HEK293 (cell line): ENCODE measurements at regions of chr16 and their contacts with region 1.

Region 1: DNA sequence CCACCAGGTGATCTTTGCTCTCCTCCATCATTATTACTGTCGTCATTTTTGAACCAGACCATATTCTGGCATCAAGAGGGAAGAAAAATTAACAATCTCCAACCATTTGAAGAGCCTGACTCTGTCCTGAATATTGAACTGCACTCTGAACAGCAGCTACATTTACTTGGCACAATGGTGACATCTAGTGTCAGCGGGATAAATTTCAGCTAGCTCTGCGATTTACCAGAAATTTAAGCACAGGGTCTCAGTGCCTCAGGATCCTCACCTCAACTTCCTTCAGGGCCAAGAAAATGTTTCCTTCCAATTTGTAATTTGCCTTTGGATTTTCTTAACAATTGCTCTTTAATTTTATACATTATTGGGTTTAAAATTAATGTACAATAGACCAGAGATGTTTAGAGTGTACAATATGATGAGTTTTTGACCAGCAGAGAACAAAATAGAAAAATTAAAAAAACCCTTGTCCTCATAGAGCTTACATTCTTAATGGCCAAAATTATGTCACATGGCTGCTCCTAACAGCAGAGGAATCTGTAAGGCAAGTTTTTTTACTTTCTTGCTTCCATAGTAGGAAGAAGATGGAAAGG is 10.7 kb upstream of the ZNF19 start:
- H3K4me3 ChIP-seq: no peak overlapping the region
- H3K27ac ChIP-seq: no peak overlapping the region
- H3K4me1 ChIP-seq: no peaks in the 10 kb centered on the region
- CTCF ChIP-seq: no peak

Region 2: DNA sequence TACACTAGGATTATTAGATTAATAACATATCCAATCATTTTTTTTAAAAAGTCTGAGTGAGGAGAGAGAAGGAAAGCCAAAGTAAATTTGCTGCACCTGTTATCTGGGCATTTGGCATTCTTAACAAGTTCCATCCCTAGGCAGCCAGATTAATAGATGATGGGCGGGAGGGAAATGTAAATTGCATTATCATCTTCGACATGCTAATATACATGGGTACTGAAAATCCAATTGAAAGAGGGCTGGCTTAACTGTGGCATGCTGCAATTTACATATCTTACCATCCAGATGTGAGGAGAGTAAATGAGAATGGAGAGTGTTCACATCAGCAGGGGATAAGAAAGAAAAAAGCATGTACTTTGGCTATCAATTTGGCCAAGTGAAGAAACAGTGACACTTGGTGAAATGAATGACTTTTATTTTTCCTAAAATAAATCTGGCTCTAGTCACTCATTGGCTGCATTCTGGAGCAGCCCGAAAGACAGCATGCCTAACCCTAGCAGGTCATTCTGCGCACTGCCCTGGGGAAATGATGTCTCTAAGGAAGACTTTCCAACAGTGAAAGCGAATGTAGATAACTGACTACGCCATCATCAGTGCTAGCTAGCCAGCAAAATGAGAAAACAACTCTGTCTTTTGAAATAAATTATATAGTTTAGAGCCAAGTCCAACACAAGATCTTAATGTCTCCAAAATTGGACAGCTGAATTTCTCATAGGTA is 327.2 kb before region 1 on chr16:
- CTCF ChIA-PET with region 1: no interaction called
- POLR2A ChIA-PET with region 1: no interaction called
- H3K4me3 ChIP-seq: no peak overlapping the region
- H3K27ac ChIP-seq: no peak overlapping the region
- H3K4me1 ChIP-seq: no peaks in the 10 kb centered on the region
- CTCF ChIP-seq: no peak

Region 3: GRCh38 chr16:71520555-71520954 is 20.7 kb after region 1 on chr16:
- CTCF ChIA-PET with region 1: interaction called, 18 read pairs
- POLR2A ChIA-PET with region 1: no interaction called
- H3K4me3 ChIP-seq: no peak overlapping the region
- H3K27ac ChIP-seq: no peak overlapping the region
- H3K4me1 ChIP-seq: no peaks in the 10 kb centered on the region
- CTCF ChIP-seq: no peak

Region 4: DNA sequence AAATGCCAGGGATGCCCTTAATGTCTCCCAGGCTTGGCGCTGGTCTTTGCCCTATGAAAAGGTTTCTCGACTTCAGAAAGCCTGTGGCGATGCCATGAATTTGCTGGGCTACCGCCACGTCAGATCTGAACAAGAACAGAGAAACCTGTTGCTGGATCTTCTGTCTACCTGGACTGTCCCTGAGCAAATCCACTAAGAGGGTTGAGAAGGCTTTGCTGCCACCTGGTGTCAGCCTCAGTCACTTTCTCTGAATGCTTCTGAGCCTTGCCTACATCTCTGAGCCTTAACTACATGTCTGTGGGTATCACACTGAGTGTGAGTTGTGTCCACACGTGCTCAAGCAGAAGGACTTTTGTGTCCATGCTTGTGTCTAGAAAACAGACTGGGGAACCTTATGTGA is 37.8 kb after region 1 on chr16:
- CTCF ChIA-PET with region 1: interaction called, 34 read pairs
- POLR2A ChIA-PET with region 1: no interaction called
- H3K4me3 ChIP-seq: no peak overlapping the region
- H3K27ac ChIP-seq: no peak overlapping the region
- H3K4me1 ChIP-seq: no peaks in the 10 kb centered on the region
- CTCF ChIP-seq: peak; percentile 53; the same call in 1 of the 2 replicates